BJ (cell line): ENCODE measurements at regions of chr3 and their contacts with region 1.

Region 1: GRCh38 chr3:181008796-181009195 is 19.3 kb upstream of the DNAJC19 start:
- DNase-seq: no peak
- H3K4me3 ChIP-seq: no peak overlapping the region
- H3K27me3 ChIP-seq: no peaks in the 10 kb centered on the region
- CTCF ChIP-seq: no peak

Region 2: GRCh38 chr3:180990505-180990904 is 18.3 kb before region 1 on chr3:
- CTCF ChIA-PET with region 1: no interaction called
- POLR2A ChIA-PET with region 1: interaction called, 21 read pairs
- DNase-seq: no peak
- H3K4me3 ChIP-seq: peak overlapping the region; percentile 68
- H3K27me3 ChIP-seq: no peaks in the 10 kb centered on the region
- CTCF ChIP-seq: no peak